CD4-positive, alpha-beta memory T cell (primary cell): ENCODE measurements at regions of chr3 and their contacts with region 1.

Region 1: GRCh38 chr3:32391643-32392535 is at the start of gene CMTM7:
- DNase-seq: peak; percentile 57 to 81 (median 67)
- H3K4me3 ChIP-seq: peak within 1 kb of the TSS; percentile 63 to 75
- H3K4me3 Mint-ChIP-seq: peak within 1 kb of the TSS; percentile 95 to 99 (median 97)
- H3K27ac ChIP-seq: peak within 1 kb of the TSS; percentile 76
- H3K27ac Mint-ChIP-seq: peak within 1 kb of the TSS; percentile 95 to 98 (median 97)
- H3K4me1 ChIP-seq: peaks cover 57% of the 10 kb centered on the region
- H3K4me1 Mint-ChIP-seq: peaks cover 36 to 64% (median 46%) of the 10 kb centered on the region in 4 donors
- H3K27me3 ChIP-seq: no peaks in the 10 kb centered on the region
- H3K27me3 Mint-ChIP-seq: no peaks in the 10 kb centered on the region
- total RNA-seq, gene CMTM7: 44.2 to 48.0 TPM

Region 2: GRCh38 chr3:32374788-32375595 is 16.9 kb before region 1 on chr3:
- CTCF ChIA-PET with region 1: interaction called, 156 read pairs
- POLR2A ChIA-PET with region 1: interaction called, 27 read pairs
- intact Hi-C with region 1: loop called (anchors 1 kb)
- DNase-seq: peak; percentile 74 to 78 (median 78)
- H3K4me3 ChIP-seq: no peak overlapping the region
- H3K4me3 Mint-ChIP-seq: peak overlapping the region in 1 of 8 donors; percentile 21
- H3K27ac ChIP-seq: no peak overlapping the region
- H3K27ac Mint-ChIP-seq: peak overlapping the region in 5 of 7 donors; percentile 18 to 70 (median 33)
- H3K4me1 ChIP-seq: peaks cover 21% of the 10 kb centered on the region
- H3K4me1 Mint-ChIP-seq: peaks cover 18 to 28% (median 24%) of the 10 kb centered on the region in 4 donors
- H3K27me3 ChIP-seq: no peaks in the 10 kb centered on the region
- H3K27me3 Mint-ChIP-seq: no peaks in the 10 kb centered on the region

Region 3: DNA sequence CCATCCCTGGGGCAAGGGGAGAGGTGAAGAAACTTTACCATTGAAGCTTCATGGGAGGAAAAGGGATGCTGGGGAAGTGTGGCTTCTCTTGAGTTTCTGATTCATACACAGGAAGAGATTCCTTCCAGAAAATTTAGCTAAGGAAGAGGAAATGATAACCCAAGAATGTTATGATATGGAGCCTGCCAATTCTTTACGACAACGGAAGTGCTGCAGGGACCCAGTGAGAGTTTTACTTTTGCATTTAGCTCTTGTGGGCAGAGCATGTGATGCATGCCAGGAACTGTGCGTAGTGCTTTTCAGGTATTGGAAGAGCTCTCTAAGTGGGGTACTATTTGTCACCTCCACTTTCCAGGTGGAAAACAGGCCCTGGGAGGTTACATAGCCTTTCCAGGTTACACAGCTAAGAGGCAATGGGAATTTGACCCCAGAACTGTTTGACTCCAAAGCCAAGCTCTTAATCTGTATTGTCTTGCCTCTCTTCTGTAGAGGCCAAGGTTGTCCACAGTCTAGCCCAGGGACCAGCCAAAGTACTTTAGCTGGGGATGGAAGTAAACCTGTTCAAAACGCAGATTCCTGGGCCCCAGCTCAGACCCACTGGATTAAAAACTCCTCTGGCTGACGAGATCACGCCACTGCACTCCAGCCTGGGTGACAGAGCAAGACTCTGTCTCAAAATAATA is 22.8 kb after region 1 on chr3:
- CTCF ChIA-PET with region 1: interaction called, 4 read pairs
- POLR2A ChIA-PET with region 1: interaction called, 13 read pairs
- intact Hi-C with region 1: no loop called
- DNase-seq: peak; percentile 61 to 70 (median 65)
- H3K4me3 ChIP-seq: no peak overlapping the region
- H3K4me3 Mint-ChIP-seq: peak overlapping the region; percentile 45 to 73 (median 56)
- H3K27ac ChIP-seq: peak overlapping the region; percentile 58
- H3K27ac Mint-ChIP-seq: peak overlapping the region; percentile 88 to 98 (median 97)
- H3K4me1 ChIP-seq: peaks cover 76% of the 10 kb centered on the region
- H3K4me1 Mint-ChIP-seq: peaks cover 48 to 87% (median 64%) of the 10 kb centered on the region in 4 donors
- H3K27me3 ChIP-seq: no peaks in the 10 kb centered on the region
- H3K27me3 Mint-ChIP-seq: no peaks in the 10 kb centered on the region

Region 4: GRCh38 chr3:32428092-32429068 is 36.5 kb after region 1 on chr3:
- CTCF ChIA-PET with region 1: interaction called, 4 read pairs
- POLR2A ChIA-PET with region 1: interaction called, 22 read pairs
- intact Hi-C with region 1: loop called (anchors 5 kb)
- DNase-seq: peak; percentile 49 to 68 (median 53)
- H3K4me3 ChIP-seq: peak overlapping the region; percentile 4 to 21
- H3K4me3 Mint-ChIP-seq: peak overlapping the region; percentile 59 to 88 (median 78)
- H3K27ac ChIP-seq: peak overlapping the region; percentile 64
- H3K27ac Mint-ChIP-seq: peak overlapping the region; percentile 90 to 98 (median 97)
- H3K4me1 ChIP-seq: peaks cover 96% of the 10 kb centered on the region
- H3K4me1 Mint-ChIP-seq: peaks cover 69 to 98% (median 85%) of the 10 kb centered on the region in 4 donors
- H3K27me3 ChIP-seq: no peaks in the 10 kb centered on the region
- H3K27me3 Mint-ChIP-seq: no peaks in the 10 kb centered on the region